Calu3 (cell line): ENCODE measurements at regions of chr2 and their contacts with region 1.

Region 1: GRCh38 chr2:236352761-236353593 is 88.8 kb upstream of the ASB18 start:
- DNase-seq: peak; percentile 41
- H3K4me3 Mint-ChIP-seq: no peak overlapping the region
- H3K27ac Mint-ChIP-seq: no peak overlapping the region
- H3K4me1 Mint-ChIP-seq: no peaks in the 10 kb centered on the region
- H3K27me3 Mint-ChIP-seq: peaks cover 35% of the 10 kb centered on the region
- CTCF ChIP-seq: peak; percentile 86

Region 2: DNA sequence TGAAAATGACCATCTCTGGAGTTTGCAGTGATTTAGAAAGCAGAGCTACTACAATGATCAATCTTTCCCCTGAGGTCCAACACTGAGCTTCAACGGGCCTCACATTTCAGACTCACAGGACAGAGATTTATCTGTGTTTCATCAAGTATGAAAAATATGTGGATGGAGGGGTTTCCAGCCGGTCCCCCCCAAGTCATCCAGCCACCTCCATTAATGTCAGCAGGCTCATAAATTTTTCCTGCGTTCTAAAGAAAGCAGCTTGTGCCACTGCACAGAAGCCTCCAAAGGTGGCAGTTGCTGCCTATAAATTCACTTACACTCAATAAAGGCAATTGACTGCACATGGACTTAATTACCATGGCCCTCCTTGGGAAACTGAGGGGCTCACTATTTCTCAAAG is 99.3 kb after region 1 on chr2:
- CTCF ChIA-PET with region 1: no interaction called
- intact Hi-C with region 1: no loop called
- DNase-seq: no peak
- H3K4me3 Mint-ChIP-seq: no peak overlapping the region
- H3K27ac Mint-ChIP-seq: no peak overlapping the region
- H3K4me1 Mint-ChIP-seq: peaks cover 8% of the 10 kb centered on the region
- H3K27me3 Mint-ChIP-seq: peaks cover 37% of the 10 kb centered on the region
- CTCF ChIP-seq: no peak

Region 3: DNA sequence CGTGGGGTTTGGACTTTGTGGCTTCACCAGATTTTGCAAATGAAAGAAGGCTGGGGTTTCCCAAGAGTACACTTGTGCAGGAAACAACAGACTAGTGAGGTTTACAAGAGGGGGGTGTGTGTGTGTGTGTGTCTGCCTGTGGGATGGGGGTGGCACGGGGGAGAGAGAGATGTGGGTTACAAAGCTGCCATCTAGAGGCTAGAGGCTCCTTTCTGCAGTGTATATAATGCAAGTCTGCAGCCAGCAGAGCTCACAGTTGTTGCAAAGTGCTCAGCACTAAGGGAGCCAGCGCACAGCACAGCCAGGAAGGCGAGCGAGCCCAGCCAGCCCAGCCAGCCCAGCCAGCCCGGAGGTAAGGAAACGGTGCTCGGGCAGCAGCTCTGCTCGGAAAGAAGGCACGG is 216.6 kb after region 1 on chr2 and contains the start of gene ACKR3:
- CTCF ChIA-PET with region 1: no interaction called
- intact Hi-C with region 1: loop called (anchors 2 kb)
- DNase-seq: peak; percentile 76
- H3K4me3 Mint-ChIP-seq: peak within 1 kb of the TSS; percentile 80
- H3K27ac Mint-ChIP-seq: peak within 1 kb of the TSS; percentile 23
- H3K4me1 Mint-ChIP-seq: peaks cover 28% of the 10 kb centered on the region
- H3K27me3 Mint-ChIP-seq: peaks cover 14% of the 10 kb centered on the region
- CTCF ChIP-seq: peak; percentile 58
- total RNA-seq, gene ACKR3: 8.8 and 9.5 TPM in 2 replicates